ENCODE measurements at regions of chr1 and their contacts with region 1.

Region 1: GRCh38 chr1:23098463-23099170 is 70.0 kb downstream of the LUZP1 start:
- DNase-seq: peak; percentile 79
- ATAC-seq: peak; percentile 87
- H3K4me3 ChIP-seq: no peak overlapping the region
- H3K4me3 Mint-ChIP-seq: peak overlapping the region; percentile 2
- H3K27ac ChIP-seq: no peak overlapping the region
- H3K27ac Mint-ChIP-seq: no peak overlapping the region
- H3K4me1 ChIP-seq: peaks cover 7 to 12% of the 10 kb centered on the region in 2 donors
- H3K4me1 Mint-ChIP-seq: peaks cover 15% of the 10 kb centered on the region
- H3K27me3 ChIP-seq: no peaks in the 10 kb centered on the region
- H3K27me3 Mint-ChIP-seq: no peaks in the 10 kb centered on the region
- CTCF ChIP-seq: peak; percentile 93

Region 2: DNA sequence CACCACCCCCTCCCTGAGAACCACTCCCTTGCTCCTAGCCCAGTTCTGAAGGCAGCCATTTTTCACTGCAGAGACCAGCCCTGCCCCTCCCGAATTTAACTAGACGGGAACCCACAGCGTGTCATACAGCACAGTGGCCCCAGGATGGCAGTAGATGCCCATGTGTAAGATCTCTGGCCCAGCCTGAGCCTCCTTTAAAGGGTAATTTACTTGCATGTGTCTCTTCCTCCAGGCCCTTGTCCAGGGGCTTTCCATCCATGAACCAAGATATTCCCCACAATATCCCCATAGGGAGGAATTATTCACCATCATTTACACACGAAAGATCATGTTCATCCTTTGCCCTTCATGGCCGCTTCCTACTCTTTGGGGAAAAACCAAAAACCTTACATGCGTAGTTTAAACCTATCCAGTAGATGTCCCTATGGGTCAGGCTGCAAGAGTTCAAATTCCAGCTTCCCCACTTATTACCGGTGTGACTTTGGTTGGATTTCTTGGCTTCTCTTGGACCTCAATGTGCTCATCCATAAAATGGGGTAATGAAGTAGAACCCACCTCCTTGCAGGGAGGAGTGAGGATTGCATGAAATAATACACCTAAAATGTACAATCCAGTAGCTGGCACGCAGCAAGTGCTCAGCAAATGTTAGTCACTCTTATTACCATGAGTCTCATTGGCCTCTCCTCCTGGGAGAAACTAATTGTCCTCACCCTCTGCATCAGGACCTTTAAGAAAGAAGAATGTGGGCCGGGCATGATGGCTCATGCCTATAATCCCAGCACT is 122.0 kb before region 1 on chr1:
- CTCF ChIA-PET with region 1: interaction called, 3 read pairs
- POLR2A ChIA-PET with region 1: no interaction called
- intact Hi-C with region 1: loop called (anchors 1 kb)
- DNase-seq: peak; percentile 59
- ATAC-seq: peak; percentile 84
- H3K4me3 ChIP-seq: no peak overlapping the region
- H3K4me3 Mint-ChIP-seq: no peak overlapping the region
- H3K27ac ChIP-seq: no peak overlapping the region
- H3K27ac Mint-ChIP-seq: no peak overlapping the region
- H3K4me1 ChIP-seq: no peaks in the 10 kb centered on the region
- H3K4me1 Mint-ChIP-seq: no peaks in the 10 kb centered on the region
- H3K27me3 ChIP-seq: peaks cover 0 to 8% (median 0%) of the 10 kb centered on the region in 4 experiments
- H3K27me3 Mint-ChIP-seq: peaks cover 34% of the 10 kb centered on the region
- CTCF ChIP-seq: peak; percentile 71

Region 3: DNA sequence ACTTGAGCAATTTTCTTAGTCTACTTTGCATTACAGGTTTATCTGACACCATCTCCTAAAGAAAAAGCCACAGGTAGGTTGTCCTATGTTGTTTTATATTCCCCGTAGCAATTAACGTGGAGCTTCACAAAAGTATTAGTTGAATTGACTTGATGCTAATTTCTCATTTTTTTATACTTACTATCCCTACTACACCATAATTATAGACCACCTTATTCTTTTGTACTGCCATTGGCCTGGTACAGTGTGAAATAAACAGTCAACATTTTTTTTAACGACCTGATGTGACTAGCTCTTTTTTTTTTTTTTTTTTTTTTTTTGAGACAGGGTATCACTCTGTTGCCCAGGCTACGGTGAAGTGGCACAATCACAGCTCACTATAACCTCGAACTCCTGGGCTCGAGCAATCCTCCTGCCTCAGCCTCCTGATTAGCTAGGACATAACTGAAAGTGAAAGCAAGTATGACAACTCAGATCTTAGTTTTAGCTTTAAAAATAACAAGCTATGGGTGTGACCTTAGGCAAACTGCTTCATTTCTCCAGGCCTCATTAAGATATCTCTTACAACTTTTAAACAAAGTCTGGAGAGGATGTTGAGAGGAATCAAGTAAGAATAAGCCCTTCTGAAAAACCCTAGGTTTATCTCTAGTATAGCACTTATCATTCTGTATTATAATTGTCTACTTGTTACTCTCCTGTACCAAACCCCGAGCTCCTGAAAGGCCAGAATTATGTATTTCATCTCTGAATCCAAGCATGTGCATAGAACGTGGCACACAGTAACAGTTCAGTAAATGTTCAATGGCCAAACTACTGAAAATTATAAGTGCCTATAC is 20.6 kb after region 1 on chr1:
- CTCF ChIA-PET with region 1: interaction called, 45 read pairs
- POLR2A ChIA-PET with region 1: no interaction called
- intact Hi-C with region 1: loop called (anchors 2 kb)
- DNase-seq: no peak
- ATAC-seq: no peak
- H3K4me3 ChIP-seq: peak overlapping the region in 1 of 5 experiments; percentile 31
- H3K4me3 Mint-ChIP-seq: peak overlapping the region; percentile 33
- H3K27ac ChIP-seq: no peak overlapping the region
- H3K27ac Mint-ChIP-seq: peak overlapping the region; percentile 41
- H3K4me1 ChIP-seq: peaks cover 20 to 24% of the 10 kb centered on the region in 2 donors
- H3K4me1 Mint-ChIP-seq: peaks cover 49% of the 10 kb centered on the region
- H3K27me3 ChIP-seq: no peaks in the 10 kb centered on the region
- H3K27me3 Mint-ChIP-seq: no peaks in the 10 kb centered on the region
- CTCF ChIP-seq: no peak

Region 4: DNA sequence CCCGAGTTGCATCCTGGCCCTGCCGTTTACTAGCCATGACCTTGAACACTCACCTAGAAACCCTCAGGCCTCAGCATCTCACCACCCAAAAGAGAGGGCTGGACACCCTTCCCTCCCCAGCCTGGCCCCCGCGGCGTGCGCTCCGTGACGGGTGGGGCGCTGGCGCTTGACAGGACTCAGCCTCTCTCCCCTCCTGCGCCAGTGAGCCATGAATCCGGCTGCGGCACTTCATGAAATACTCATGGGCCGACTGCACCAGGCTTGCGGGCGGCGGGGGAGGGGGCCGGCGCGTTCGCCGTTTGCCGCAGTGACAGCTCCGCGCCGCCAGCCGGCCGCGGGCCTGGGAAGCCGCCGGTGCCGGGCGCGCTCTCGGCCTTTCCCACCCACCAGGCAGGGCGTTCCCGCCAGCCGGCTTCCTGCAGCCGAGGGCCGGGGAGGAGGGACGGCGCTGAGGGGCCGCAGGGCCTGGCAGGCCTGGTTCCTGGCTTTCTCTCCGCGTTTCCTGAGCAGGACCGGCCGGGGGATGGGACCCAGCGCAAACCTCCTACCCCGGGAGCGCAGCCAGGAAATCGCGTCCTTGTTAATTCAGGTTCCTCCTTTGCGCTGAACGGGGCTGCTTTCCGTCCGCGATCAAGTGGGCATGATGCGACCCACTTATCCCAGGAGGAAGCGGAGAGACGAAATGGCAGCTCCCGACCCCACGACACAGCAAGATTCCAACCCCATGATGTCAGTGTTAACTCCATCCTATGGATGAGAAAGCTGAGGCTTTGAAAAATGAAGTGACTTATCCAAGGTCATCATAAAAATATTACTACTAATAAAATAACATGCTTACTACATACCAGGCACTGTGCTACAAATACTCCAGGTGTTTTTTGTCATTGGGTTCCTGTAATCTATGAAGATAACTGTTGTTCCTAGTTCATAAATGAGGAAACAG is 79.1 kb after region 1 on chr1:
- CTCF ChIA-PET with region 1: interaction called, 884 read pairs
- POLR2A ChIA-PET with region 1: interaction called, 6 read pairs
- intact Hi-C with region 1: no loop called
- DNase-seq: peak; percentile 86
- ATAC-seq: peak; percentile 95
- H3K4me3 ChIP-seq: peak overlapping the region; percentile 46 to 70 (median 65)
- H3K4me3 Mint-ChIP-seq: peak overlapping the region; percentile 87
- H3K27ac ChIP-seq: peak overlapping the region; percentile 51 to 61
- H3K27ac Mint-ChIP-seq: peak overlapping the region; percentile 85
- H3K4me1 ChIP-seq: peaks cover 25 to 26% of the 10 kb centered on the region in 2 donors
- H3K4me1 Mint-ChIP-seq: peaks cover 38% of the 10 kb centered on the region
- H3K27me3 ChIP-seq: no peaks in the 10 kb centered on the region
- H3K27me3 Mint-ChIP-seq: no peaks in the 10 kb centered on the region
- CTCF ChIP-seq: peak; percentile 14

Region 5: DNA sequence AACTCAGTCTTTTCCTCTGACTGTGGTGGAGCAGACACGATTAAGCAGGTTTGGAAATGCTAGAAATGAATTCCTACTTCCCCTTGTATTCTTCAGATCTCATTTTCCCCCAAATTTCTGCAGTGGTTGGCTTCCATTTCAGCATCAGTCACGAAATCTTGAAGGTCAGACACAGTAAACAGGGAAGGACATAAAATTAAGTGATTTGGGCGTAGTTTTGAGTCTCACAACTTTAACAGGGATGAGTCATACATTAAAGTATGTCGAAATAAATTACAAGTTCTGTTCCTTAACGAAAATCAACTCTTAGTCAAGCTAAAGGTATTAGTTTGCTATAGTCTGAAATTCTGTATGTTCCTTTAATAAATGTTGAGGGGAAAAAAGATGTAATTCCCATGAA is 184.3 kb after region 1 on chr1:
- CTCF ChIA-PET with region 1: interaction called, 5 read pairs
- POLR2A ChIA-PET with region 1: no interaction called
- intact Hi-C with region 1: loop called (anchors 10 kb)
- DNase-seq: no peak
- ATAC-seq: no peak
- H3K4me3 ChIP-seq: no peak overlapping the region
- H3K4me3 Mint-ChIP-seq: no peak overlapping the region
- H3K27ac ChIP-seq: no peak overlapping the region
- H3K27ac Mint-ChIP-seq: no peak overlapping the region
- H3K4me1 ChIP-seq: no peaks in the 10 kb centered on the region
- H3K4me1 Mint-ChIP-seq: no peaks in the 10 kb centered on the region
- H3K27me3 ChIP-seq: no peaks in the 10 kb centered on the region
- H3K27me3 Mint-ChIP-seq: no peaks in the 10 kb centered on the region
- CTCF ChIP-seq: no peak

Measured in B cell (primary cell).